GM13976 (cell line): ENCODE measurements at regions of chr1 and their contacts with region 1.

Region 1: GRCh38 chr1:232328486-232329100 is 301.3 kb downstream of the SIPA1L2 start:
- DNase-seq: no peak
- CTCF ChIP-seq: no peak

Region 2: DNA sequence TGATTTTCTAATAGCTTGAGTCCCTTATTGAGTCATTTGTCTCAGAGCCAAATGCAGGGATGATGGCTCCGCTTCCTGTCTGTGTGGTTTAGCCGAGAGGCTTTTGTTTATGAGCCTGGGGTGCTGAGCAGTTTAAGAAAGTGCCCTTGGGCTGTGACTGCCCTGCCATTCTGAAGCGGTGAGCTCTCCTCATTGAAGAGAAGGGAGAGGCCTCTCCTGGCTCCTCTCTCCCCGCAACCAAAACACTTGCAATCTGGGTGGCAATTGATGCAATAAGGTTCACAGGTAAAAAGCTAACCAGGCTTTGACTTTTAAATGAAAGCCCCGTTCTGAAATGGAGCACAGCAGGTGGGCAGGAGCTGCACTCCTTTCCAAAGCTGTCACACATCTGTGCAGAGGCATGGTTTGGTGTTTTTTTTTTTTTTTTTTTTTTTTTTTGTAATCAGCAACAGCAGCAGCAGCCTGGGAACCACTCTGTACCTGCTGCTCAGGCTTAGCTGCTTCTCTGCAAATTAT is 102.3 kb before region 1 on chr1:
- in situ Hi-C with region 1: loop called (anchors 25 kb)
- DNase-seq: no peak
- CTCF ChIP-seq: no peak

Region 3: GRCh38 chr1:233005703-233006102 is 677.1 kb after region 1 on chr1:
- in situ Hi-C with region 1: no loop called
- DNase-seq: no peak
- CTCF ChIP-seq: no peak